MCF 10A (cell line): ENCODE measurements at regions of chr5 and their contacts with region 1.

Region 1: GRCh38 chr5:82165740-82166530 is 112.2 kb downstream of the RPS23 start:
- DNase-seq: peak; percentile 94
- H3K4me3 Mint-ChIP-seq: no peak overlapping the region
- H3K27ac Mint-ChIP-seq: peak overlapping the region; percentile 88
- H3K4me1 Mint-ChIP-seq: peaks cover 41% of the 10 kb centered on the region
- H3K27me3 Mint-ChIP-seq: no peaks in the 10 kb centered on the region
- CTCF ChIP-seq: peak; percentile 89

Region 2: GRCh38 chr5:81506900-81507588 is 658.9 kb before region 1 on chr5:
- CTCF ChIA-PET with region 1: interaction called, 18 read pairs
- POLR2A ChIA-PET with region 1: interaction called, 6 read pairs
- intact Hi-C with region 1: loop called (anchors 1 kb)
- DNase-seq: peak; percentile 79
- H3K4me3 Mint-ChIP-seq: no peak overlapping the region
- H3K27ac Mint-ChIP-seq: no peak overlapping the region
- H3K4me1 Mint-ChIP-seq: no peaks in the 10 kb centered on the region
- H3K27me3 Mint-ChIP-seq: no peaks in the 10 kb centered on the region
- CTCF ChIP-seq: peak; percentile 73

Region 3: GRCh38 chr5:81787474-81788242 is 378.3 kb before region 1 on chr5:
- CTCF ChIA-PET with region 1: interaction called, 22 read pairs
- POLR2A ChIA-PET with region 1: interaction called, 12 read pairs
- intact Hi-C with region 1: no loop called
- DNase-seq: peak; percentile 93
- H3K4me3 Mint-ChIP-seq: peak overlapping the region; percentile 45
- H3K27ac Mint-ChIP-seq: peak overlapping the region; percentile 92
- H3K4me1 Mint-ChIP-seq: peaks cover 25% of the 10 kb centered on the region
- H3K27me3 Mint-ChIP-seq: no peaks in the 10 kb centered on the region
- CTCF ChIP-seq: no peak

Region 4: GRCh38 chr5:81856948-81857928 is 308.7 kb before region 1 on chr5:
- CTCF ChIA-PET with region 1: interaction called, 25 read pairs
- POLR2A ChIA-PET with region 1: interaction called, 53 read pairs
- intact Hi-C with region 1: no loop called
- DNase-seq: peak; percentile 93
- H3K4me3 Mint-ChIP-seq: peak overlapping the region; percentile 65
- H3K27ac Mint-ChIP-seq: peak overlapping the region; percentile 96
- H3K4me1 Mint-ChIP-seq: peaks cover 34% of the 10 kb centered on the region
- H3K27me3 Mint-ChIP-seq: no peaks in the 10 kb centered on the region
- CTCF ChIP-seq: peak; percentile 5

Region 5: GRCh38 chr5:82107267-82107666 is 58.7 kb before region 1 on chr5:
- CTCF ChIA-PET with region 1: interaction called, 99 read pairs
- POLR2A ChIA-PET with region 1: interaction called, 94 read pairs
- intact Hi-C with region 1: loop called (anchors 1 kb)
- DNase-seq: peak; percentile 36
- H3K4me3 Mint-ChIP-seq: no peak overlapping the region
- H3K27ac Mint-ChIP-seq: peak overlapping the region; percentile 50
- H3K4me1 Mint-ChIP-seq: peaks cover 27% of the 10 kb centered on the region
- H3K27me3 Mint-ChIP-seq: no peaks in the 10 kb centered on the region
- CTCF ChIP-seq: peak; percentile 56

Region 6: GRCh38 chr5:82225525-82226172 is 59.7 kb after region 1 on chr5:
- CTCF ChIA-PET with region 1: interaction called, 18 read pairs
- POLR2A ChIA-PET with region 1: interaction called, 3 read pairs
- intact Hi-C with region 1: no loop called
- DNase-seq: peak; percentile 75
- H3K4me3 Mint-ChIP-seq: no peak overlapping the region
- H3K27ac Mint-ChIP-seq: no peak overlapping the region
- H3K4me1 Mint-ChIP-seq: peaks cover 12% of the 10 kb centered on the region
- H3K27me3 Mint-ChIP-seq: no peaks in the 10 kb centered on the region
- CTCF ChIP-seq: peak; percentile 85

Region 7: DNA sequence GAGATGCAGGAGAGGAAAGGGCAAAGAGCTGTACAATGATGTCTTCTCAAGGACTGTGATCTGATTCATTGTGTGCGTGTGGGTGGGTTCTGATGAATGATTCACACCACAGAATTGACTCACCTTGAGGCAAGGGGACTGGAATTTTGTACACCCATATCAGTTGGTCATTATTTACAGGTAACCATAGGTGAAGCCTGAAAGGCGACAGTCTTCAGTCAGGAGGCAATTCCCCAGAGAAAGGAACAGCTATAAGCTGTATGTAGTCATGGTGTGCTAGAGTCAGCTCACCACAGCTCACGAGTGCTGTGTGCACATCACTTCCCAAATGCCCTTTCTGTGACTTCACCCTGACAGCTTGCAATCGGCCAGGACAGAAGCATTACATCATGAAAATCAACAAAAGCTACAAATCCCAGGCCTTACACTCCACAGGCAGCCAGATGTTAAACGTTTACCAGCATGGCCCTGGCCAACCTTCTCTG is 199.9 kb after region 1 on chr5:
- CTCF ChIA-PET with region 1: no interaction called
- POLR2A ChIA-PET with region 1: no interaction called
- intact Hi-C with region 1: no loop called
- DNase-seq: peak; percentile 82
- H3K4me3 Mint-ChIP-seq: no peak overlapping the region
- H3K27ac Mint-ChIP-seq: peak overlapping the region; percentile 46
- H3K4me1 Mint-ChIP-seq: peaks cover 18% of the 10 kb centered on the region
- H3K27me3 Mint-ChIP-seq: no peaks in the 10 kb centered on the region
- CTCF ChIP-seq: no peak